Activated T-helper 1 cell treated with anti-CD3 and anti-CD28 coated beads, Interleukin-12 subunit alpha, Interleukin-12 subunit beta, Interleukin-2, Interleukin-4 antibody, amounts not matched to agents 30 ng/mL and 10 ng/mL and 1 ng/mL, durations not matched to agents 14 hours and 24 hours and 36 hours (primary cell): ENCODE measurements at regions of chr14 and their contacts with region 1.

Region 1: DNA sequence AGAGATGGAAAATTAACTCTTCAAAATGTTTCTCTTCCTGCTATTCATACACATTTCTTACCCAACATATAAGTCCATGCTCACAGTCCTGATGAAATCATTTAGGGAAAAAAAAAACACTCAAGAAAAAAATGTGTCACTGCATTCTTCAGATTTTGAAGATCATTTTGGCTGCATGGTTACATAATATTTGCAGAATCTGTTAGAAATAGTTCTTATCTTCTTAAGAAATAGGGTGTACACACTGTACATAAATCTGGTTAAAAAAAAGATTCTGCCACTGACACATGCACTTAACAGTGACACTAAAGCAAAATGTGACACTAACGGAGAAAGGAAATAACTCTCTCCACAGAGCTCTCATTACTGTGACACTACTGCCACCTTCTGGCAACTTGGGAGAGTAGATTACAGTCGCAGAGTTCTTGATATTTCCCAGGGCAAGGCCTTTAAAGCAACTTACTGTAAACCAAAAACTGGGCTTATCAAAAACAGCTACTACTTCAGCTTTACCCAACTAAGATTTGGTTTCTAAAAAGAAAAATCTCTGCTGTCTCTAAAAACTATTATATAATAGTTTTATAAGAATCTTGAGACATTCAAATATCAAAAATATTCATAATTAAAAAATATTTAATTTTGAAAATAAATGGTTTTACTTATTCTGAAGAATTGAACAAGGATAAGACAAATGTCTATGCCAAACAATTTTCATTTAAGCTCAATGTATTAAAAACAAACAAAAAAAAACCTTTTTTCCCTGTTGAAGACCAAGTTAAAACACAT is 65.0 kb downstream of the SETD3 start:
- DNase-seq: peak; percentile 55
- H3K4me3 Mint-ChIP-seq: no peak overlapping the region
- H3K27ac Mint-ChIP-seq: no peak overlapping the region
- H3K4me1 Mint-ChIP-seq: peaks cover 26% of the 10 kb centered on the region
- H3K27me3 Mint-ChIP-seq: no peaks in the 10 kb centered on the region

Region 2: GRCh38 chr14:99177886-99178835 is 237.5 kb before region 1 on chr14:
- intact Hi-C with region 1: no loop called
- DNase-seq: no peak
- H3K4me3 Mint-ChIP-seq: no peak overlapping the region
- H3K27ac Mint-ChIP-seq: peak overlapping the region; percentile 81
- H3K4me1 Mint-ChIP-seq: peaks cover 56% of the 10 kb centered on the region
- H3K27me3 Mint-ChIP-seq: no peaks in the 10 kb centered on the region

Region 3: GRCh38 chr14:99320105-99320572 is 95.5 kb before region 1 on chr14:
- intact Hi-C with region 1: loop called (anchors 1 kb)
- DNase-seq: peak; percentile 69
- H3K4me3 Mint-ChIP-seq: no peak overlapping the region
- H3K27ac Mint-ChIP-seq: no peak overlapping the region
- H3K4me1 Mint-ChIP-seq: peaks cover 17% of the 10 kb centered on the region
- H3K27me3 Mint-ChIP-seq: no peaks in the 10 kb centered on the region

Region 4: GRCh38 chr14:99393047-99393655 is 22.5 kb before region 1 on chr14:
- intact Hi-C with region 1: loop called (anchors 1 kb)
- DNase-seq: no peak
- H3K4me3 Mint-ChIP-seq: no peak overlapping the region
- H3K27ac Mint-ChIP-seq: peak overlapping the region; percentile 34
- H3K4me1 Mint-ChIP-seq: peaks cover 6% of the 10 kb centered on the region
- H3K27me3 Mint-ChIP-seq: no peaks in the 10 kb centered on the region